PC-9 (cell line): ENCODE measurements at regions of chr4 and their contacts with region 1.

Region 1: GRCh38 chr4:31026256-31026655 is 306.1 kb downstream of the PCDH7 start:
- DNase-seq: no peak
- H3K4me3 ChIP-seq: no peak overlapping the region
- H3K27ac ChIP-seq: no peak overlapping the region
- H3K4me1 ChIP-seq: no peaks in the 10 kb centered on the region
- H3K27me3 ChIP-seq: no peaks in the 10 kb centered on the region
- CTCF ChIP-seq: no peak

Region 2: GRCh38 chr4:30972546-30972945 is 53.7 kb before region 1 on chr4:
- CTCF ChIA-PET with region 1: no interaction called
- POLR2A ChIA-PET with region 1: no interaction called
- intact Hi-C with region 1: loop called (anchors 5 kb)
- DNase-seq: no peak
- H3K4me3 ChIP-seq: no peak overlapping the region
- H3K27ac ChIP-seq: no peak overlapping the region
- H3K4me1 ChIP-seq: no peaks in the 10 kb centered on the region
- H3K27me3 ChIP-seq: no peaks in the 10 kb centered on the region
- CTCF ChIP-seq: no peak